ENCODE measurements at regions of chr4 and their contacts with region 1.

Region 1: DNA sequence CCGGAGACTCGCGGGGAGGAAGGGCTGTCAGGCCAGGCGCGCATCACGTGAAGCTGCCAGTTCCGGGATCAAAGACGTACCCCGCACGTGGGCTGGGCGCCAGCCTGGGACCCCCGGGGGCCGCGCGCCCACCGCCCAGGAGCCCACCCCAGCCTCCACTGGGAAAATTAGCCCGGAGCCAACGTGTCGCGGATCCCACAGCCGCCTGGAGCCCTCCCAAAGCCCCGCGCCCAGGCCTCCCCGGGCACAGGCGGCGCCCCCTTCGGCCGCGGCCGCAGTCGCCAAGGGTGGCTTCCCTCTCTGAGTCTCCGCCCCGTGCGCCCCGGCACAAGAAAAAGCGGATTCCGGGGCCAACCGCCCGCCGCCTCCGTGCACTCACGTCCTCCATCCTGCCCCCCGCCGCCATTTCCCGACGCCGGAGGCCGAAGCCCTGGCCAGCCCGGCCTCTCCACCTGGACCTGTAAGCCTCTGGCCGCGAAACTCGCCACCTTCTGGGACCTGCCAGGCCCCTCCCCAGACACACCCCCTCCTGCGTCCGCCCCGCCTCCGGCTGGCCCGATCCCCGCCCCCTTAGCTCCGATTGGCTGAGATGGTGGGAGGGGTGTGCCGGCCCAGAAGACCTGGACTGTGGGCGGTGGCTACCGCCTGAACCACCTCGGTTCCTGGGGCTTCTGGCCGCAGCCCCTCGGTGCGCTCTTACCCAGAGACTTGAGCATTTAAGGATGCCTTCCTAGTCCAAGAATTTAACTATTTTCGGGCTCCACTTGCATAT is at the start of gene TMEM192:
- DNase-seq: peak; percentile 93
- ATAC-seq: peak; percentile 98
- H3K4me3 Mint-ChIP-seq: peak within 1 kb of the TSS; percentile 93
- H3K27ac Mint-ChIP-seq: peak within 1 kb of the TSS; percentile 93
- H3K4me1 Mint-ChIP-seq: peaks cover 20% of the 10 kb centered on the region
- H3K27me3 Mint-ChIP-seq: peaks cover 4% of the 10 kb centered on the region
- total RNA-seq, gene TMEM192: 6.7 to 8.4 TPM

Region 2: GRCh38 chr4:163895378-163896005 is 1217.1 kb before region 1 on chr4:
- CTCF ChIA-PET with region 1: no interaction called
- POLR2A ChIA-PET with region 1: no interaction called
- DNase-seq: no peak
- ATAC-seq: no peak
- H3K4me3 Mint-ChIP-seq: no peak overlapping the region
- H3K27ac Mint-ChIP-seq: no peak overlapping the region
- H3K4me1 Mint-ChIP-seq: no peaks in the 10 kb centered on the region
- H3K27me3 Mint-ChIP-seq: no peaks in the 10 kb centered on the region

Region 3: DNA sequence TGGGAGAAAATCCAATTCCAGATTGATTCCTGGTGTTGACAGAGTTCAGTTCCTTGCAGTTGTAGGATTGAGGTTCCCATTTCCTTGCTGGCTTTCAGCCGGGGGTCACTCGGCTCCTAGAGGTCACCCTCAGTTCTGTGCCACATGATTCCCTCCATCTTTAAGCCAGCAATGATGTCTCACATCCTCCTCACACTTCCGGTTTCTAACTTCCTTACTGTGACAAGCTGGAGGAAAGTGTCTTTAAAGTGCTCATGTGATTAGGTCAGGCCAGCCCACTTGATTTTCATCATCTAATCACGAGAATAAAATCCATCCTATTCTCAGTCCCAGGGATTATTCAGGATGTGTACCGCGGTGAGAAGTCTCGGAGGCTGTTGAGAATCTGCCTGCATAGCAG is 378.1 kb before region 1 on chr4:
- CTCF ChIA-PET with region 1: no interaction called
- POLR2A ChIA-PET with region 1: no interaction called
- DNase-seq: no peak
- ATAC-seq: no peak
- H3K4me3 Mint-ChIP-seq: no peak overlapping the region
- H3K27ac Mint-ChIP-seq: no peak overlapping the region
- H3K4me1 Mint-ChIP-seq: peaks cover 6% of the 10 kb centered on the region
- H3K27me3 Mint-ChIP-seq: peaks cover 7% of the 10 kb centered on the region

Region 4: GRCh38 chr4:164847967-164848649 is 264.4 kb before region 1 on chr4:
- CTCF ChIA-PET with region 1: no interaction called
- POLR2A ChIA-PET with region 1: no interaction called
- DNase-seq: no peak
- ATAC-seq: no peak
- H3K4me3 Mint-ChIP-seq: no peak overlapping the region
- H3K27ac Mint-ChIP-seq: no peak overlapping the region
- H3K4me1 Mint-ChIP-seq: no peaks in the 10 kb centered on the region
- H3K27me3 Mint-ChIP-seq: no peaks in the 10 kb centered on the region

Region 5: DNA sequence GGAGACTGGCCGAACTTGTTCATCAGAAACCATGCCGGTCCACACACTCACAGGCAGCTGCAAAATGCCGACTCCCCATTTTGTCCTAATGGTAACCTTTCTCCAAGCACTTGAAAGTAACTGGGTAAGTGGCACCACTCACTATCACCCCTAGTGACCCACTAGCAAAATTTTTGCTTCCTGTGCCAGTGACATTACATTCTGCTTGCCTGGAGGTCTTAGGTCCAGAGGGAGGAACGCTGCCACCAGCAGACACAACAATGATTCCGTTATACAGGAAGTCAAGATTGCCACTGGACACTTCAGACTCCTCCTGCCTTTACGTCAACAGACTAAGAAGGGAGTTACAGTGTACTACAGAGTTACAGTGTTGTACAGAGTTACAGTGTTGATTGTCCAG is 11.9 kb after region 1 on chr4:
- CTCF ChIA-PET with region 1: interaction called, 39 read pairs
- POLR2A ChIA-PET with region 1: no interaction called
- DNase-seq: no peak
- ATAC-seq: no peak
- H3K4me3 Mint-ChIP-seq: no peak overlapping the region
- H3K27ac Mint-ChIP-seq: no peak overlapping the region
- H3K4me1 Mint-ChIP-seq: peaks cover under 1% of the 10 kb centered on the region
- H3K27me3 Mint-ChIP-seq: peaks cover 20% of the 10 kb centered on the region

Region 6: GRCh38 chr4:165327211-165328100 is 214.9 kb after region 1 on chr4 and contains the start of gene MSMO1:
- CTCF ChIA-PET with region 1: interaction called, 13 read pairs
- POLR2A ChIA-PET with region 1: no interaction called
- DNase-seq: peak; percentile 99
- ATAC-seq: peak; percentile 99
- H3K4me3 Mint-ChIP-seq: no peak within 1 kb of the TSS
- H3K27ac Mint-ChIP-seq: peak within 1 kb of the TSS; percentile 60
- H3K4me1 Mint-ChIP-seq: peaks cover 41% of the 10 kb centered on the region
- H3K27me3 Mint-ChIP-seq: no peaks in the 10 kb centered on the region
- total RNA-seq, gene MSMO1: 47.4 to 51.6 TPM

Region 7: DNA sequence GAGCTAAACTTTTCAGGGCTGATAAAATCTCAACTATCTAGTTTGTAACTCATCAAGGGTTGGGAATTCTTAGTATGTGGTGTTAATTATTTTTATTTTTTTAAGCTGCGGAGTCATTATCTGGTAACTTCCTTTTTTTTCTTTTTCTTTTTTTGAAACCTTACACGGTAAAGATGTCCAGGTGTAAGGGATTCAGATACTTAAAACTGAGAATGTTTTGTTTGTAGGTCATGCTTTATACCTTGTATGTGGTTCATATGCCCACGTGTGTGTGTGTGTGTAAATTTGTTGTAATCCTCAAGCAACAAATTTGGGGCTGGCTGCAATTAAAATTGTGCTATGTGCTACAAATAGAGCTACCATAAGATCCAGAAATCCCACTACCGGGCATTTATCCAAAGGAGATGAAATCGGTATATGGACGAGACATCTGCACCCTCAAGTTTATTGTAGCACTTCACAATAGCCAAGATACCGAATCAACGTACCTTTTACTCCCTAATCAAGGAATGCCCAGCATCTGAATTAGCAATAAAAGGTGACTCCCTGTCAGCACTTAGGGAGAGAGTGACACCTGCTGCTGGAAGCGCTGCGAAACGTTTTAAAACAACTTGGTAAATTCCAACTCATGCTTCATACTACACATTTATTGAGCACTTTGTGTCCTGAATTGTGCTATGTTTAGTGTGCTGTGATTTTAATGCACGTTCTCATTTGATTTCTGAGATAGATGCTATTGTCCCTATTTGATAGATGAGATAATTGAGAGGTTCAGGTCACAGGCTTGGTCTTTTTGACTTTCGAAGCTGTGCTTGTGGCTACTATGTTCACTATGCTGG is 231.0 kb after region 1 on chr4:
- CTCF ChIA-PET with region 1: interaction called, 22 read pairs
- POLR2A ChIA-PET with region 1: interaction called, 3 read pairs
- DNase-seq: no peak
- ATAC-seq: no peak
- H3K4me3 Mint-ChIP-seq: no peak overlapping the region
- H3K27ac Mint-ChIP-seq: no peak overlapping the region
- H3K4me1 Mint-ChIP-seq: peaks cover 7% of the 10 kb centered on the region
- H3K27me3 Mint-ChIP-seq: no peaks in the 10 kb centered on the region

Region 8: GRCh38 chr4:165464813-165465381 is 352.3 kb after region 1 on chr4:
- CTCF ChIA-PET with region 1: interaction called, 11 read pairs
- POLR2A ChIA-PET with region 1: no interaction called
- DNase-seq: peak; percentile 36
- ATAC-seq: peak; percentile 61
- H3K4me3 Mint-ChIP-seq: no peak overlapping the region
- H3K27ac Mint-ChIP-seq: no peak overlapping the region
- H3K4me1 Mint-ChIP-seq: no peaks in the 10 kb centered on the region
- H3K27me3 Mint-ChIP-seq: peaks cover 10% of the 10 kb centered on the region

Measured in activated CD8-positive, alpha-beta T cell treated with anti-CD3 and anti-CD28 coated beads, Interleukin-2, amount 10 ng/mL, durations not matched to agents 7 days and 5 days (primary cell).